ENCODE measurements at regions of chr16 and their contacts with region 1.

Region 1: DNA sequence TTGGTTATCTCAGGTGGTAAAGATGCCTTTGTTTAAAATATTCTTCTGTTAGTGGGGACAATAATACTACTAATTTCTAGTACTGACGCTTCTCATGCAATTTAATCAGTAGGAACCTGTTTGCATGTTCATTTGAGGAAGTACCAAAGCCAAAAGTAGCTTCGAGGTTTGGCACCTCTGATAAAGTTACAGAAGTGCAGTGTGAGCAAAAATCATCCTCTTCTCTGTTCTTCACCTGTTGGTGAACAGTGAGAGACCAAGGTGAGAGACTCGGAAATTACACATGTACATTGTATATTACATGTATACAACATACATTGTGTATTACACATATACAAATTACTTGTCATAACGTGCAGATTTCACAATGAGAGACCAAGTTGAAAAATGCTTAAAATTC is 404.6 kb downstream of the MAF start:
- DNase-seq: no peak
- ATAC-seq: no peak

Region 2: GRCh38 chr16:78882751-78883150 is 313.2 kb before region 1 on chr16:
- intact Hi-C with region 1: no loop called
- DNase-seq: no peak
- ATAC-seq: no peak

Region 3: GRCh38 chr16:79128706-79129105 is 67.2 kb before region 1 on chr16:
- intact Hi-C with region 1: loop called (anchors 5 kb)
- DNase-seq: no peak
- ATAC-seq: peak; percentile 48

Region 4: DNA sequence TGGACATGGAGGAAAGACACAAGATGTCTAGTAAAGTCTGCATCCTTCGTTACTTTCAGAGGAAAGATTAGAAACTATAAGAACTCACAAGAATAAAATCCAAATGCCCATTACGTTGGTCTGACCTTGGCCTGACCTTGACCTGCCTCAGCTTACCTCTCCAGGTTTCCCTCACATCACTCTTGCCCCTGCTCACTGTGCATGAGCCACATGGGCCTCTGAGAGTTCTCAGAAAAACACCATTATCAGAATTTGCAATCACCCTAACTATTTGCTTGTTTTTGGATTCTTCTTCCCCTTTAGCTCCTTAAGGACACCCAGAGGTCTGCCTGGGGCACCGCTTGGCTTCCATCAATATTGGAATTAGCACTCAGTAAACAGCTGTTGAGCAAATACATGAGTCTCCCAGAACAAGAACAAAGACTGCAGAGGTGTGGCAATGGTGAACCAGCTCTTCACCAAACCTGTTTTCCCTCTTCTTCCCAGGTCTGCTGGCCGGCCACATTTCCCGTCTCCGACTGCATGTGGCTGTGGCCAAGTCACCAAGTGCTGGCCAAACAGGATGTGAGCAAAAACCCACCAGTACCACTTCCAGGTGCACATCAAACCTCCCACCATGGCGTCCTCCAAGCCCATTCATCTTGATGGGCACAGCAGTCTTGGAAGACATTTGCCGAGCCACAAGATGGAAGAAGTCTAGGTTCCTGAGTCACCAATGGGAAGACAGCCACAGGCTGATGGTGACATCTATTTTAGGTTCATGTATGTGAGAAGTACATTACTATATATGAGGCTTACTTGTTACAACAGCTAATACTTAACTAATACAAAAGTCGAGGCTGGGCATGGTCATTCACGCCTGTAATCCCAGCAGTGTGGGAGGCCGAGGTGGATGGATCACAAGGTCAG is 1418.1 kb after region 1 on chr16:
- intact Hi-C with region 1: no loop called
- DNase-seq: no peak
- ATAC-seq: no peak

Measured in sciatic nerve (tissue), 2 donors.